Dendritic cell treated with granulocyte-macrophage colony-stimulating factor and Interleukin-4, amounts not matched to agents 40 ng/mL and 50 ng/mL, for 4 days (primary cell): ENCODE measurements at regions of chr11 and their contacts with region 1.

Region 1: DNA sequence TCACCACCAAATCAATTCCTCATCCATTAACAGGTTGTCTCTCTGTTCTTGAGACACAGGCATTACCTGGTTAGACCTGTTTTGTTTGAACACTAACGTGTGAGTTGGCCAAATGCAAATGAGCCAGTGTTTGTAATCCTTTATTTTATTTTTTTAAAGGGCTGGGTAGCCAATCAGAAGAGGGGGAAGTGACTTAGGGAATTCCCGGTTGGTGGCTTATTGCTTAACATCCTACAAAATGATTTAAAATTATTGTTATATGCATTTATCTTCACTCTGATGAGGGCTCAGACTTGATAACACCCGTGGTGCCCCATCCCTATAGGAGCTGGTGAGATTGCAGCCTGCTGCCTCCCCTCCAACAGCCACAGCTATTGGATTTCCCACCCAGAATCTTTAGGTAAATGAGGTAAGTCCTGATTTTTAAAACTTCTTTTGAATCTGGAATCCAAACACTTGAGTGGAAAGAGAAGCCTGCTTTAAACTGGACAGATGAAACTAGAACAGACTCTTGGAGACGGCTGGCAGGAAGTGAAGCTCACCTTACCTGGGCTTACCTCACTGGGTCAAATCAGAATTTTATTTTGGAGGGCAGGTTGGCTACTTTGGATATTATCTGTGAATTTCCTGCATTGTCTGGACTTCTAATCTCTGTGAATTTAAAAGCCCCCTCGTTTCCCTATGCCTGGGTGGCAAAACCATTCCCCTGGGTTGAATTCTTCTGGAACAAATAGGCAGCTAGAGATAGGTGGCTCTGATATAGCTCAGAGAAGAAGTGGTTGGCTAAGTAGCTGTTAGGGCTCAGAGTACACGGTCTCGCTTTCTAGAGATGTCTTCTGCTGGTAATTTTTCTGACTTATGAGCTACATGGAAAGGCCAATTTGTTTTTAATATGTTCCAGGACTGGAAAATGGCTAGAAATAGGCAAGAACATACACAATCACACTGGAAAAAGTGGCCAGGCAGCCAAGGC is at the start of gene EHF:
- H3K4me3 Mint-ChIP-seq: peak within 1 kb of the TSS; percentile 76
- H3K27ac Mint-ChIP-seq: peak within 1 kb of the TSS; percentile 84
- H3K4me1 Mint-ChIP-seq: peaks cover 79% of the 10 kb centered on the region
- H3K27me3 Mint-ChIP-seq: no peaks in the 10 kb centered on the region

Region 2: DNA sequence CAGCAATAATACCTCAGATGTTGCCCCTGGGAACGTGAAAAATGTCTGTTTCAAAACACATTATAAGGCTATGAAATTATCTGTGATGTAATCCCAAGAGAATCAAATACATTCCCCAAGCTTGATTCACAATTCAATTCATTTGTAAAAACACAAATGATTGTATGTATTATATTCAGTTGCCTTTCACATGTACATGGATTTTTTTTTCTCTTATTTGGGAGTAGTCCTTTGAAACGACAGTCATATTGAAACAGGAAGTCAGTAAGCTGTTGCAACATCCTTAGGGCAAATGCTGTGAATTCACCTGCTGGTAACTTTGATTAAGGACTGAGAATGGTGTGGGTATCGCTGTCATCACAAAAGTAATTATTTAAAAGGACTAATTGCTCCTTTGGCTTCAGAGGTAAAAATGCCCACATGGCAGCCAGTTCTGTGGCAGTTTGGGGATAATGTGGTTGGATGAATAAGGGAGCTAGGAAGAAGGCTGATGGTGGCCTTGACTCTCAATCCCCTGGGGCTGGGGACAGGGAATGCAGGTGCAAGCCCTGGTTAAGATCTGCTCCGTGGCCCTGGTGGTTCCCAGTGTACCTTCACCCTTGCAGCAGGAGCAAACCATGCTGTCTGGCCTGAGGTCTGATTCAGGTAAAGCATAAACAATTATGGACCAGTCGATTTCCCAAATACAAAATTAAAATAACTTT is 13.0 kb after region 1 on chr11:
- intact Hi-C with region 1: loop called (anchors 2 kb)
- H3K4me3 Mint-ChIP-seq: peak overlapping the region; percentile 34
- H3K27ac Mint-ChIP-seq: peak overlapping the region; percentile 73
- H3K4me1 Mint-ChIP-seq: peaks cover 74% of the 10 kb centered on the region
- H3K27me3 Mint-ChIP-seq: no peaks in the 10 kb centered on the region

Region 3: GRCh38 chr11:34685864-34686263 is 64.8 kb after region 1 on chr11:
- intact Hi-C with region 1: no loop called
- H3K4me3 Mint-ChIP-seq: no peak overlapping the region
- H3K27ac Mint-ChIP-seq: no peak overlapping the region
- H3K4me1 Mint-ChIP-seq: peaks cover 5% of the 10 kb centered on the region
- H3K27me3 Mint-ChIP-seq: no peaks in the 10 kb centered on the region

Region 4: GRCh38 chr11:34754171-34754823 is 133.2 kb after region 1 on chr11:
- intact Hi-C with region 1: no loop called
- H3K4me3 Mint-ChIP-seq: no peak overlapping the region
- H3K27ac Mint-ChIP-seq: no peak overlapping the region
- H3K4me1 Mint-ChIP-seq: peaks cover 10% of the 10 kb centered on the region
- H3K27me3 Mint-ChIP-seq: peaks cover 20% of the 10 kb centered on the region